ENCODE measurements at regions of chr7 and their contacts with region 1.

Region 1: GRCh38 chr7:105934572-105935185 is 28.4 kb upstream of the CDHR3 start:
- DNase-seq: peak; percentile 7
- ATAC-seq: peak; percentile 83
- H3K4me3 ChIP-seq: no peak overlapping the region
- H3K27ac ChIP-seq: no peak overlapping the region
- H3K4me1 ChIP-seq: no peaks in the 10 kb centered on the region
- H3K27me3 ChIP-seq: no peaks in the 10 kb centered on the region
- CTCF ChIP-seq: peak; percentile 25 to 33 (median 29); a peak in 4 of 6 replicates
- POLR2A ChIP-seq: no peak
- RAD21 ChIP-seq: peak; percentile 56

Region 2: GRCh38 chr7:106009403-106010226 is 74.9 kb after region 1 on chr7:
- CTCF ChIA-PET with region 1: no interaction called
- POLR2A ChIA-PET with region 1: no interaction called
- RAD21 ChIA-PET with region 1: no interaction called
- intact Hi-C with region 1: loop called (anchors 5 kb)
- DNase-seq: peak; percentile 63
- ATAC-seq: peak; percentile 99
- H3K4me3 ChIP-seq: peak overlapping the region in 1 of 2 experiments; percentile 19; a peak in 2 of 4 replicates
- H3K27ac ChIP-seq: no peak overlapping the region
- H3K4me1 ChIP-seq: peaks cover 8 to 12% of the 10 kb centered on the region in 2 experiments; a peak in 3 of 4 replicates
- H3K27me3 ChIP-seq: no peaks in the 10 kb centered on the region
- CTCF ChIP-seq: peak; percentile 96 to 98 (median 97)
- POLR2A ChIP-seq: no peak
- RAD21 ChIP-seq: peak; percentile 98